Activated CD8-positive, alpha-beta T cell treated with anti-CD3 and anti-CD28 coated beads for 36 hours (primary cell): ENCODE measurements at regions of chr15 and their contacts with region 1.

Region 1: DNA sequence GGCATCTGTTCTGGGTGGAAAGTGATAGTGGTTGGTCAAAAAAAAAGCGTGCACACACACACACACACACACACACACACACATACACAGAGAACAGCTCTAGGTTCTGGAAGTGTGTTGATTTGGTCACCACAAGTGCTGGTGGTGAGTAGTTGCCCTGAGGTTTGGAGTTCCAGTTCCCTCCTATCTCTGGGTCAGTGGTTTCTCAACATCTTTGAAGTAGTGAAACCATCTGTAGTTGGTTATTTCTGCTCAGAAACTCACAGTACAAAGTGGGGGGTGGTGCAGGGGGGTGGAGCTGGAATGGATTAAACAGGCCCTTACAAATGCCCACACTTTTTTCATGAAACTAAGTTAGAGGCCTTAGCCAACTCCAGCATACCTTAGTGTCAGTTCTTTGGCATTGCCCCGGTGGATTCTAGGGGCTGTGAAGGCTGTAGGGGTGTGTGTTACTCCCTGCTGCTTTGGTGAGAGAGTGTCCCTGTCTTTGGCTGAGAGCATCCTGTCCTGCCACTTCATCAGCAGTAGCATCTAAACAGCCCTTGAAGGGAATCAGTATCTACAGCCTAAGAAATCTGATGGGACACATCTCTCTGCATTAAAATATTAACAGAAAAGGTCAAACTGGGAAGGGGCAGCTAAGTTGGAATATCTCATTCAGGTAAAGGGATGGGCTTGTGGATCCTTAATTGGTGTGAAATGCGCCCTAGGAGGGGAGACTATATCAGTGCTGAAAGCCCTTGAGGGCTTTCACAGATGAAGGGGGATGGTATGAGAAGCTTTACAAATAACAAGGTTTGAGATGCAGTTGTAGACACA is 20.6 kb downstream of the SMAD3 start:
- DNase-seq: peak; percentile 79
- ATAC-seq: peak; percentile 50
- H3K4me3 Mint-ChIP-seq: peak overlapping the region; percentile 32
- H3K27ac Mint-ChIP-seq: peak overlapping the region; percentile 85
- H3K4me1 Mint-ChIP-seq: peaks cover 95% of the 10 kb centered on the region
- H3K27me3 Mint-ChIP-seq: no peaks in the 10 kb centered on the region
- CTCF ChIP-seq: no peak

Region 2: DNA sequence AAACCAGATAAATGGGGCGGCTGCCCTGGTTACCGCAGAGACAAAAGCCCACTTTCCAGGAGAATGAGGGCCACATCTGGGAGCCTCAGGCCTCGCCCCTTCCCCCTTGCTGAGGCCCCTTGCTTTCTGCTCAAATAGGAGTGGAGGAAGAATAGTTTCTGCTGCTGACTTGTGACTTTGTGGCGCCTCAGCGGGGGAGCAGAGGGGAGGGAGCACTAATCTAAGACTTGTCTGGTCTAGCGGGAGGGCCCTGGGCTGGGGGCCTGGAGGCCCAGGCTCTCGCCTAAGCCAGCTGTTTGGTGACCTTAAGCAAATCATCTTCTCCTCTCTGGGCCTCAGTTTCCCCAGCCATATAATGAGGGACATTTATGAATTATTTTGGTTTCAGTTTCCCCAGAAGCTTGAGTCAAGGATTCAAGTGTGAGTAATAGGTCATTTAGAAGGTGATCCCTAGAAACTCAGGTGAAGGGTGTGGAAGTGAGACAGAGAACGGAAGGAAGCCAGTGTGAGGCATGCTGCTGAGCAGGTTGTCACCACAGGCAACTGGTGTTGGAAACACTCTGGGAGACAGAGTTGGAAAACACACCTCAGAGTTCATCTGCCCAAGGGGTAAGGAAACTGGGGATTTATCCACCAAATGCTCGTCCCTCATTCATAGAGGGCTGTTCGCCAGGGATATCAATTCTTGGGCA is 46.5 kb before region 1 on chr15:
- CTCF ChIA-PET with region 1: interaction called, 3 read pairs
- POLR2A ChIA-PET with region 1: interaction called, 4 read pairs
- intact Hi-C with region 1: loop called (anchors 5 kb)
- DNase-seq: peak; percentile 27
- ATAC-seq: peak; percentile 18
- H3K4me3 Mint-ChIP-seq: peak overlapping the region; percentile 34
- H3K27ac Mint-ChIP-seq: no peak overlapping the region
- H3K4me1 Mint-ChIP-seq: peaks cover 52% of the 10 kb centered on the region
- H3K27me3 Mint-ChIP-seq: peaks cover 3% of the 10 kb centered on the region
- CTCF ChIP-seq: no peak

Region 3: DNA sequence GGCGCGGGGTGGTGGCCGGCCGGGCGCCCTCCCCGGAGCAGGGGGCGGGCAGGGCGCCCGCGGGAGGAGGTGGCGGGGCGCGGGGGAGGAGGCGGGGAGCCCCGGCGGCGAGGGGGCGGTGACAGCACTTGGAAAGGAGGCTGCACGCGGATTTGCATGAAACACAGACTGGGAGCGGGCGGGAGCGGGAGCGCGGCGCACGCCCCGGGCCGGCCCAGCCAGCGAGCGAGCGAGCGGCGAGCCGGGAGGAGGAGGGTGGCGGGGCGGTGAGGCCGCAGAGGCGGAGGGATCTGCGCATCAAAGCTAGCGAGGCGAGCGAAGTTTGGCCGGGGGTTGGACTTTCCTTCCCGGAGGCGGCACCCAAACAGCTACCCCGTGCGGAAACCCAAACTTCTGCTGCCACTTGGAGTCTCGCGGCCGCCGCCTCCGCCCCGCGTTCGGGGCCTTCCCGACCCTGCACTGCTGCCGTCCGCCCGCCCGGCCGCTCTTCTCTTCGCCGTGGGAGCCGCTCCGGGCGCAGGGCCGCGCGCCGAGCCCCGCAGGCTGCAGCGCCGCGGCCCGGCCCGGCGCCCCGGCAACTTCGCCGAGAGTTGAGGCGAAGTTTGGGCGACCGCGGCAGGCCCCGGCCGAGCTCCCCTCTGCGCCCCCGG is 20.5 kb before region 1 on chr15 and contains the start of gene SMAD3:
- CTCF ChIA-PET with region 1: interaction called, 11 read pairs
- POLR2A ChIA-PET with region 1: interaction called, 40 read pairs
- intact Hi-C with region 1: no loop called
- DNase-seq: peak; percentile 80
- ATAC-seq: peak; percentile 51
- H3K4me3 Mint-ChIP-seq: peak within 1 kb of the TSS; percentile 92
- H3K27ac Mint-ChIP-seq: peak within 1 kb of the TSS; percentile 93
- H3K4me1 Mint-ChIP-seq: peaks cover 44% of the 10 kb centered on the region
- H3K27me3 Mint-ChIP-seq: peaks cover 15% of the 10 kb centered on the region
- CTCF ChIP-seq: no peak
- total RNA-seq, gene SMAD3: 22.3 to 24.7 TPM

Region 4: GRCh38 chr15:67120839-67121643 is 35.0 kb after region 1 on chr15:
- CTCF ChIA-PET with region 1: interaction called, 4 read pairs
- POLR2A ChIA-PET with region 1: interaction called, 5 read pairs
- intact Hi-C with region 1: loop called (anchors 5 kb)
- DNase-seq: peak; percentile 93
- ATAC-seq: peak; percentile 94
- H3K4me3 Mint-ChIP-seq: peak overlapping the region; percentile 65
- H3K27ac Mint-ChIP-seq: peak overlapping the region; percentile 97
- H3K4me1 Mint-ChIP-seq: peaks cover 76% of the 10 kb centered on the region
- H3K27me3 Mint-ChIP-seq: no peaks in the 10 kb centered on the region
- CTCF ChIP-seq: no peak

Region 5: DNA sequence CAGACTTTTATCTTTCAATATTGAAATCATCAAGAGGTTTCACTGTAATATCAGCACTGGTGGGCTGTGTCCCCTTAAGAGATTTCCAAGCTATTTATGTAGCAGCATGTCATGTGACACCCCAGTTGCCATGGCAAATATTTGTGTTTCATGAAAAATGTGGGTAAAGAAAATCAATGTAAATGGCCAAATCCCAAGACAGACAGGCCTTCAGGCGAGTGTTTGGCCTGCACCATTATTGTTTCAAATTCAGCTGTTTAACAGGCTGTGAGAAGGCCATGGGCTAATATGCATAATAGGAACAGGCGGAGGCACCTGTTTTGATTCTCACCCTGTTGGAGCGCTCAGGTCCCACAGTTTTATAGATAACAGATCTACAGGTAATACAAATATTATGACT is 272.8 kb after region 1 on chr15:
- CTCF ChIA-PET with region 1: no interaction called
- POLR2A ChIA-PET with region 1: no interaction called
- intact Hi-C with region 1: no loop called
- DNase-seq: no peak
- ATAC-seq: no peak
- H3K4me3 Mint-ChIP-seq: no peak overlapping the region
- H3K27ac Mint-ChIP-seq: no peak overlapping the region
- H3K4me1 Mint-ChIP-seq: no peaks in the 10 kb centered on the region
- H3K27me3 Mint-ChIP-seq: peaks cover 4% of the 10 kb centered on the region
- CTCF ChIP-seq: no peak